Activated B cell treated with CpG ODN at 0.5 μM for 24 hours (primary cell): ENCODE measurements at regions of chr19 and their contacts with region 1.

Region 1: GRCh38 chr19:21568816-21569493 is 63.6 kb downstream of the ZNF429 start:
- DNase-seq: peak; percentile 58
- ATAC-seq: peak; percentile 94
- H3K4me3 Mint-ChIP-seq: peak overlapping the region; percentile 99
- H3K27ac Mint-ChIP-seq: peak overlapping the region; percentile 96
- H3K4me1 Mint-ChIP-seq: peaks cover 19% of the 10 kb centered on the region
- H3K27me3 Mint-ChIP-seq: no peaks in the 10 kb centered on the region
- CTCF ChIP-seq: no peak

Region 2: DNA sequence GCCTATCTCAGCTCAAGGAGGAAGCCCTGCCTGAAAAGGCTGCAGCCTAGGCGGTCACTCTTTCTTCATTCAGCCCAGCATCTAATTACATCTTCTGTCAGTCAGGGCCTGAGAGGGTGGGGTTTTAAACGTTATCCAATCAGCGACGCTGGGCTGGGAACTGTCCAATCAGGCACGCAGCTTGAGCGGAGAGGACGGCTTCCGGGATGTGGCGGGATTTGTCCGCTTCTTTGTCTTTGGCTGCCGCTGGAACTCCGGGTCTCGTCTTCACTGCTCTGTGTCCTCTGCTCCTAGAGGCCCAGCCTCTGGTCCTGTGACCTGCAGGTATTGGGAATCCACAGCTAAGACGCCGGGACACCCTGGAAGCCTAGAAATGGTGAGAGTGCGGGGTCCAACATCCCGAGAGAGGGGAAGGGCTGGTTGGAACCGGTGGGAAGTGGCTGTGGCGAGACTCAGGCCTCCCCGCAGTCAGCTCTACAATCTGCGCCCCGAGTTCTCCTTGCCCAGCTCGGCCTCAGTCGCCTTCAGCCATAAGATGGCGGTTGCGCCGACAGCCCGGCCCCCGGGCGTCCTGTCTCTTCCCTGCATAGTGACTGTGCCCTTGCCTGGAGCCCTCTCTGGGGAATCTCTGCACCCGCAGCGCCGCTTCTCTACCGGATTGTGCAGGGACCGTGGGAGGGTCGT is 210.0 kb before region 1 on chr19 and contains the start of gene ZNF738:
- CTCF ChIA-PET with region 1: no interaction called
- POLR2A ChIA-PET with region 1: interaction called, 5 read pairs
- intact Hi-C with region 1: loop called (anchors 1 kb)
- DNase-seq: peak; percentile 70
- ATAC-seq: peak; percentile 96
- H3K4me3 Mint-ChIP-seq: peak within 1 kb of the TSS; percentile 100
- H3K27ac Mint-ChIP-seq: peak within 1 kb of the TSS; percentile 96
- H3K4me1 Mint-ChIP-seq: peaks cover 13% of the 10 kb centered on the region
- H3K27me3 Mint-ChIP-seq: no peaks in the 10 kb centered on the region
- CTCF ChIP-seq: no peak
- total RNA-seq, gene ZNF738: 18.7 and 22.2 TPM in 2 replicates

Region 3: GRCh38 chr19:21532904-21533303 is 36.1 kb before region 1 on chr19:
- CTCF ChIA-PET with region 1: no interaction called
- POLR2A ChIA-PET with region 1: no interaction called
- intact Hi-C with region 1: no loop called
- DNase-seq: no peak
- ATAC-seq: no peak
- H3K4me3 Mint-ChIP-seq: no peak overlapping the region
- H3K27ac Mint-ChIP-seq: no peak overlapping the region
- H3K4me1 Mint-ChIP-seq: no peaks in the 10 kb centered on the region
- H3K27me3 Mint-ChIP-seq: no peaks in the 10 kb centered on the region
- CTCF ChIP-seq: no peak